ENCODE measurements at regions of chr21 and their contacts with region 1.

Region 1: DNA sequence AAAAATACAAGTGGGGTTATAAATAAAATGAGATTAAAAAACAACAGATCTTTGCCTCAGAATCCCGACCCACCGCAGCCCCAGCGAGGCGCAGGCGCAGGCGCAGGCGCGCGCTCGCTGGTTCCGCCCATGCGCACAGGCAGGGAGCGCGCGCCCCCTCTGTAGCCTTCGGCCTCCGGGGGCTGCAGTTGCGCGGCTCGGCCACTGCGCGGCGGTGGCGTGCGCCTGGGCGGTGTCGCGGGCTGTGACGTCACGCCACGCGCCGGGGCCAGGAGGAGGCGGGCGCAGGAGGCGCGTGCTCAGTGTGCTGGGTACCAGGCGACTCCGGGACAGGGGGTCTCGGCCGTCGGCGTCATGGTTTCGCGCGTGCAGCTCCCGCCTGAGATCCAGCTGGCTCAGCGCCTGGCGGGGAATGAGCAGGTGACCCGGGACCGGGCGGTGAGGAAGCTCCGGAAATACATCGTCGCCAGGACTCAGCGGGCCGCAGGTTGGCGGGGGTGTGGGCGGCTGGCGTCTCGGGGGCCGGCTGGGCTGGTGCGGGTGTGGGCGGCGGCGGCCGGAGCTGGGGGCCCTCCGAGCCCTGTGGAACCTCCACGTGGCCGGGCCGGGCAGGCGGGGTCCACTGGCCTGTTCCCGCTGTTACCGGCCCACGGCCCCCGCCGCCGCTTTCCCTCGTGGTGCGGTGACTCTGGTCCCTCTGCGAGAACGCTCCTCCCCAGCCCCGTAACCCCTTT is at the start of gene RRP1:
- DNase-seq: peak; percentile 88 to 100 (median 96)
- ATAC-seq: peak; percentile 99
- H3K4me3 ChIP-seq: peak within 1 kb of the TSS; percentile 87
- H3K4me3 Mint-ChIP-seq: peak within 1 kb of the TSS; percentile 86 to 94 (median 92)
- H3K27ac ChIP-seq: peak within 1 kb of the TSS; percentile 84
- H3K27ac Mint-ChIP-seq: peak within 1 kb of the TSS; percentile 74 to 95 (median 91)
- H3K4me1 ChIP-seq: peaks cover 5 to 10% of the 10 kb centered on the region in 2 donors
- H3K4me1 Mint-ChIP-seq: peaks cover 7 to 29% (median 21%) of the 10 kb centered on the region in 7 donors
- H3K27me3 ChIP-seq: no peaks in the 10 kb centered on the region
- H3K27me3 Mint-ChIP-seq: no peaks in the 10 kb centered on the region
- total RNA-seq, gene RRP1: 24.2 to 33.1 (median 28.8) TPM

Region 2: GRCh38 chr21:42614811-42615659 is 1174.4 kb before region 1 on chr21:
- CTCF ChIA-PET with region 1: no interaction called
- POLR2A ChIA-PET with region 1: no interaction called
- intact Hi-C with region 1: no loop called
- DNase-seq: peak; percentile 23 to 59 (median 56)
- ATAC-seq: peak; percentile 72
- H3K4me3 ChIP-seq: peak overlapping the region; percentile 60
- H3K4me3 Mint-ChIP-seq: no peak overlapping the region
- H3K27ac ChIP-seq: peak overlapping the region; percentile 31
- H3K27ac Mint-ChIP-seq: no peak overlapping the region
- H3K4me1 ChIP-seq: peaks cover 12 to 36% of the 10 kb centered on the region in 2 donors
- H3K4me1 Mint-ChIP-seq: peaks cover 3 to 28% (median 13%) of the 10 kb centered on the region in 7 donors
- H3K27me3 ChIP-seq: no peaks in the 10 kb centered on the region
- H3K27me3 Mint-ChIP-seq: peaks cover 0 to 17% (median 0%) of the 10 kb centered on the region in 5 donors

Region 3: GRCh38 chr21:43659136-43660000 is 130.1 kb before region 1 on chr21 and contains the starts of genes HSF2BP and RRP1B:
- CTCF ChIA-PET with region 1: no interaction called
- POLR2A ChIA-PET with region 1: no interaction called
- intact Hi-C with region 1: loop called in 1 of 2 experiments (anchors 1 kb)
- DNase-seq: peak; percentile 73 to 89 (median 84)
- ATAC-seq: peak; percentile 92
- H3K4me3 ChIP-seq: peak within 1 kb of the TSS; percentile 98
- H3K4me3 Mint-ChIP-seq: peak within 1 kb of the TSS; percentile 77 to 97 (median 94)
- H3K27ac ChIP-seq: peak within 1 kb of the TSS; percentile 91
- H3K27ac Mint-ChIP-seq: peak within 1 kb of the TSS; percentile 89 to 98 (median 94)
- H3K4me1 ChIP-seq: peaks cover 31 to 32% of the 10 kb centered on the region in 2 donors
- H3K4me1 Mint-ChIP-seq: peaks cover 33 to 64% (median 50%) of the 10 kb centered on the region in 7 donors
- H3K27me3 ChIP-seq: no peaks in the 10 kb centered on the region
- H3K27me3 Mint-ChIP-seq: no peaks in the 10 kb centered on the region
- total RNA-seq, gene HSF2BP: 0.31 to 1.4 (median 0.91) TPM
- total RNA-seq, gene RRP1B: 23.9 to 44.2 (median 39.6) TPM

Region 4: GRCh38 chr21:43728467-43729390 is 60.7 kb before region 1 on chr21:
- CTCF ChIA-PET with region 1: no interaction called
- POLR2A ChIA-PET with region 1: interaction called, 4 read pairs
- intact Hi-C with region 1: loop called in 1 of 2 experiments (anchors 2 kb)
- DNase-seq: peak; percentile 52 to 88 (median 65)
- ATAC-seq: peak; percentile 90
- H3K4me3 ChIP-seq: peak overlapping the region; percentile 50
- H3K4me3 Mint-ChIP-seq: peak overlapping the region; percentile 70 to 92 (median 86)
- H3K27ac ChIP-seq: peak overlapping the region; percentile 58
- H3K27ac Mint-ChIP-seq: peak overlapping the region; percentile 56 to 90 (median 80)
- H3K4me1 ChIP-seq: peaks cover 14 to 25% of the 10 kb centered on the region in 2 donors
- H3K4me1 Mint-ChIP-seq: peaks cover 37 to 68% (median 54%) of the 10 kb centered on the region in 7 donors
- H3K27me3 ChIP-seq: no peaks in the 10 kb centered on the region
- H3K27me3 Mint-ChIP-seq: no peaks in the 10 kb centered on the region

Region 5: DNA sequence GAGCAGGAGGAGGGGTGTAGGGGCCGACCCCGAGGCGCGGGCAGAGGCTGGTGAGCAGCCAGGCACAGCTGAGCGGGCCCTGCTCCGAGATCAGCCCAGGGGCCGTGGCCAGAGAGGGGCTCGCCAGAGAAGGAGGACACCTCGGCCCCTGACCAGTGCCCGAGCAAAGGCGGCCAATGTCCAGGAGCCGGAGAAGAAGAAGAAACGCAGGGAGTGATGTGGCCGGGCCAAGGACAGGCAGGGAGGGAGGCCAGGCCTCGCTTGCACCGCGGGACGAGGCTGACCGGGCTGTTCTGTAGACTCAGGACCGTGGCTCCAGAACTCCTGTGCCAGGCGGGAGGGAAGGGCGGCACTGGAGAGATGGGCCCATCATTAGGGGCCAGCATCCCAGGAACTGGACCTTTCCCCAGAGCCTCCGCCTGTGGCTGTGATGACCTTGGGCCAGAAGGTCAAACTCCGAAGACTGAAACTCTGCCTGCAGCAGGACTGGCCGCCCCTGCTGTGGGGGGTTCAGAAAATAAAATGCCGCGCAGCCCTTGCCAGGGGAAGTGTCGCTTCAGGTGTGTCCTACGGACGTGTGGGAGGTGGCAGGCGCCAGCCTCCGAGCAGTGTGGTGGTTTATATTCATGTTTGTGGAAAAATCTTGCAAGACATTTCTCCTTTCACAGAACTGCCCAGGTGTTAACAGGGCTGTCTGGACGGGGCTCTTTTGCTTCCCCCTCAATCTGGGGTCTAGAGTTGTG is 14.3 kb after region 1 on chr21:
- CTCF ChIA-PET with region 1: no interaction called
- POLR2A ChIA-PET with region 1: no interaction called
- intact Hi-C with region 1: no loop called
- DNase-seq: no peak
- ATAC-seq: no peak
- H3K4me3 ChIP-seq: no peak overlapping the region
- H3K4me3 Mint-ChIP-seq: no peak overlapping the region
- H3K27ac ChIP-seq: no peak overlapping the region
- H3K27ac Mint-ChIP-seq: no peak overlapping the region
- H3K4me1 ChIP-seq: no peaks in the 10 kb centered on the region
- H3K4me1 Mint-ChIP-seq: peaks cover 0 to 10% (median 0%) of the 10 kb centered on the region in 7 donors
- H3K27me3 ChIP-seq: no peaks in the 10 kb centered on the region
- H3K27me3 Mint-ChIP-seq: no peaks in the 10 kb centered on the region

Region 6: DNA sequence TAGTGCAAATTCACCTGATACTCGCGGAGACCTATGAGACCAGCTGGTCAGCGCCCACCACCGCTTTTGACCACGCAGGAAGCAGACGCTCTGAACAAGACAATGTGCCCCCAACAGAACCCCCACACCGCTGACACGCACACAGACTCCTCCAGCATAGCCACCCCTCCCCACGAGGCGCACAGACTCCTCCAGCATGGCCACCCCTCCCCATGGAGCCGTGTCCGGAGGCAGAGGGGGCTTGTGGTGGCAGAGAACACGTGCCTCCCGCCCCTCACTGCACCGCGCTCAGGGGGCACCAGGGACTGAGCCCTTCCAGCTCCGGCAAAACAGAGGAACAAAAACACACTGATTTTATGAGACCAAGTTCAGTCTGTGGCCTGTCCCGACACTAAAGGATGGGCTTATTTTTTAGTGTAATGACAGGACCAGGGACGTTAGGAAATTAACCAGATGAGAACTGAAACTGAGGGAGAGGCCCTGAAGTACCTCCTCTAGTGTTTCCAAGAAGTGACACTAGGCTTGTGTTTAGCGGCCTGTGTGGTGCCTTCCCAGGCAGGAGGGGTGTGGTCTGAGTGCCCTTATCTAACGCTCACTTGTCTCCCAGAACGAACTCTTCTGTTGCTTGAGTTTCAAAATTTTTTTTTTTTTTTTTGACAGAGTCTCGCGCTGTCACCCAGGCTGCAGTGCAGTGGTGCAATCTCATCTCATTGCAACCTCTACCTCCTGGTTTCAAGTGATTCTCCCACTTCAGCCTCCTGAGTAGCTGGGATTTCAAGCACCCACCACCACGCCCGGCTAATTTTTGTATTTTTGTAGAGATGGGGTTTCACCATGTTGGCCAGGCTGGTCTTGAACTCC is 65.6 kb after region 1 on chr21:
- CTCF ChIA-PET with region 1: no interaction called
- POLR2A ChIA-PET with region 1: no interaction called
- intact Hi-C with region 1: no loop called
- DNase-seq: peak in 1 of 9 donors; percentile 61
- ATAC-seq: peak; percentile 87
- H3K4me3 ChIP-seq: no peak overlapping the region
- H3K4me3 Mint-ChIP-seq: peak overlapping the region in 1 of 10 donors; percentile 81
- H3K27ac ChIP-seq: no peak overlapping the region
- H3K27ac Mint-ChIP-seq: peak overlapping the region in 1 of 9 donors; percentile 93
- H3K4me1 ChIP-seq: no peaks in the 10 kb centered on the region
- H3K4me1 Mint-ChIP-seq: peaks cover 0 to 47% (median under 1%) of the 10 kb centered on the region in 7 donors
- H3K27me3 ChIP-seq: no peaks in the 10 kb centered on the region
- H3K27me3 Mint-ChIP-seq: peaks cover 0 to 10% (median 5%) of the 10 kb centered on the region in 5 donors

Region 7: DNA sequence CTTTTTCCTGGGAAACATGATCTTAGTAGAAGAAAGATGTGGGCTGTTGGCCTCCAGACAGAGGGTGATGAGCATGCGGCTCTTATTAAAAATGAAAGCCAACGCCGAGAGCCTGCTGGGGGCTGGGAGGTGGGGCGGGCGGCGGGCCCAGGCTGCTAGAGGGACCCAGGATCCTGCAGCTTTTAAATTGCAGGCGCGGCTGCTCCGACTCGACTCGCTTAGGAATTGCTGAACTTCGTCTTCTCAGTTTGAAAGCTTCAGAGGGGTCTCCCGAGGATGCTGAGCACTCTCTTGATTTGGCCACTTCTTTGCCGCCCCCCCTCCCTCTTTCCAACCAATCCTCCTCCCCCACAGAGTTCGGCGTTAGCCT is 76.8 kb after region 1 on chr21:
- CTCF ChIA-PET with region 1: no interaction called
- POLR2A ChIA-PET with region 1: no interaction called
- intact Hi-C with region 1: loop called in 1 of 2 experiments (anchors 2 kb)
- DNase-seq: peak in 5 of 9 donors; percentile 17 to 44 (median 31)
- ATAC-seq: peak; percentile 42
- H3K4me3 ChIP-seq: peak overlapping the region; percentile 62
- H3K4me3 Mint-ChIP-seq: peak overlapping the region; percentile 79 to 89 (median 85)
- H3K27ac ChIP-seq: peak overlapping the region; percentile 72
- H3K27ac Mint-ChIP-seq: peak overlapping the region; percentile 77 to 91 (median 89)
- H3K4me1 ChIP-seq: peaks cover 18 to 21% of the 10 kb centered on the region in 2 donors
- H3K4me1 Mint-ChIP-seq: peaks cover 28 to 50% (median 41%) of the 10 kb centered on the region in 7 donors
- H3K27me3 ChIP-seq: no peaks in the 10 kb centered on the region
- H3K27me3 Mint-ChIP-seq: peaks cover 0 to 1% (median 0%) of the 10 kb centered on the region in 5 donors

Region 8: GRCh38 chr21:43938751-43939442 is 149.5 kb after region 1 on chr21:
- CTCF ChIA-PET with region 1: no interaction called
- POLR2A ChIA-PET with region 1: interaction called, 3 read pairs
- intact Hi-C with region 1: loop called in 1 of 2 experiments (anchors 1 kb)
- DNase-seq: peak; percentile 81 to 92 (median 90)
- ATAC-seq: peak; percentile 100
- H3K4me3 ChIP-seq: peak overlapping the region; percentile 63
- H3K4me3 Mint-ChIP-seq: peak overlapping the region; percentile 79 to 95 (median 88)
- H3K27ac ChIP-seq: peak overlapping the region; percentile 64
- H3K27ac Mint-ChIP-seq: peak overlapping the region; percentile 39 to 96 (median 85)
- H3K4me1 ChIP-seq: peaks cover 0 to 9% of the 10 kb centered on the region in 2 donors
- H3K4me1 Mint-ChIP-seq: peaks cover 17 to 27% (median 21%) of the 10 kb centered on the region in 7 donors
- H3K27me3 ChIP-seq: no peaks in the 10 kb centered on the region
- H3K27me3 Mint-ChIP-seq: no peaks in the 10 kb centered on the region

Measured in naive thymus-derived CD4-positive, alpha-beta T cell (primary cell).